ENCODE measurements at regions of chr15 and their contacts with region 1.

Region 1: GRCh38 chr15:35306361-35306981 is 221.4 kb upstream of the NANOGP8 start:
- DNase-seq: no peak
- ATAC-seq: peak; percentile 52

Region 2: GRCh38 chr15:35260941-35261340 is 45.5 kb before region 1 on chr15:
- intact Hi-C with region 1: no loop called
- DNase-seq: no peak
- ATAC-seq: no peak

Region 3: DNA sequence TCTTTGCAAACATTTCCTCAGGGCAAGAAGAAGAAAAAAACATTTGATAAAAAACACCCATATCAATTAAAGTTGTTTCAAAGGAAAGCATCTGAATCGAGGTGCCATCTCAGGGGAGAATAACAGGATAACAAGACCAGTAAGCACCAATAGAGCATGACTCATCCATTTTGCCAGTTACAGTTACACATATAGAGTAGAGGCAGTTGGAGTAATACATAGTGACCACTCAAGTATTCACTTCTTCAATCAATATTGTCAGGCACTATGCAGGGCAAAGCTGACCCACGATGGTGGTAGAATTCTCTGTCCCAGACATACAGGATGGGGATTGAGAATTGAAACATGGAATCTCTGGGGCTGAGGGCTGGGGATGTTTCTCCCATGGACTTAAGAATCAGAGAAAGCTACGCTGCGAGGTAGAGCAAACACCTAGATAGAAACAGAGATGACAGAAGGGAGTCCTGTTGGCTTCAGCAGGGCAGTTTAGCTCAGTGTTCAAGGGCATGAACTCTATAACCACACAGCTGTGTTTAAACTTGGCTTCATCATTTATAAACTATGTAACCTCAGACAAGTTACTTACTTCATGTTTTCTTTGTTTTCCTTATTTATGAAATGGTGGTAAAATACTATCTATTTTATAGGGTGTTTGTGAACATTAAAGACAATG is 35.0 kb before region 1 on chr15:
- intact Hi-C with region 1: no loop called
- DNase-seq: no peak
- ATAC-seq: no peak

Region 4: DNA sequence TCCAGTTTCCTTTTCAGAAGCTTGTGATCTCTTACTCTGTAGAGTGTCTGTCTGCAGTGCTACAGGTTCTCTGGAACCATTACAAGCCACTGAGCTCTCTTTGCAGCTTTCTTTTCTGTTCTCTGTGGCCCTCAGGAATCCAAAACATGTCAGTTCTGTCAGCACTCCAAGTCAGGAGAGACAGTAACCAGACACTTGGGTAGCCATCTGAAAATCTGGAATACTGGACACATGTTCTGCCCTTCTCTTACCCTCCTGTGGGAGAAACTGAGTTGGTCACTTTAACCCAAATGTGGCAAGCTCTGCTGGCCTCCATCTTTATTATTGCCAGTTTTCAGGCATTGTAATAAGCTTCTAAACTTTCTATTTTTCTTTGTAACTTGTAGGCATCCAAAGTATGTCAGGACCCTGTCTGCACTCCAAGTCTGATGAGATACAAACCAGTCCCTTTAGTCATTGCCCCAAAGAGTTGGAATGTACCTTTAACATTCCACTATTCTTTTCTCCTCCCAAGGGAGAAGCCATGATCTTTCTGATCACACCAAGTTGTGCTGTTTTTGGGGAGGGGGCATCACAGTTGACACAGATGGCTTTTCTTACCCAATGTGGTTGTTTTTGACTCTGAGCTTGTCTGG is 55.8 kb after region 1 on chr15:
- intact Hi-C with region 1: loop called (anchors 5 kb)
- DNase-seq: no peak
- ATAC-seq: peak; percentile 82

Region 5: GRCh38 chr15:35458176-35458856 is 151.8 kb after region 1 on chr15:
- intact Hi-C with region 1: no loop called
- DNase-seq: no peak
- ATAC-seq: no peak